AG04449 (cell line): ENCODE measurements at regions of chr2 and their contacts with region 1.

Region 1: DNA sequence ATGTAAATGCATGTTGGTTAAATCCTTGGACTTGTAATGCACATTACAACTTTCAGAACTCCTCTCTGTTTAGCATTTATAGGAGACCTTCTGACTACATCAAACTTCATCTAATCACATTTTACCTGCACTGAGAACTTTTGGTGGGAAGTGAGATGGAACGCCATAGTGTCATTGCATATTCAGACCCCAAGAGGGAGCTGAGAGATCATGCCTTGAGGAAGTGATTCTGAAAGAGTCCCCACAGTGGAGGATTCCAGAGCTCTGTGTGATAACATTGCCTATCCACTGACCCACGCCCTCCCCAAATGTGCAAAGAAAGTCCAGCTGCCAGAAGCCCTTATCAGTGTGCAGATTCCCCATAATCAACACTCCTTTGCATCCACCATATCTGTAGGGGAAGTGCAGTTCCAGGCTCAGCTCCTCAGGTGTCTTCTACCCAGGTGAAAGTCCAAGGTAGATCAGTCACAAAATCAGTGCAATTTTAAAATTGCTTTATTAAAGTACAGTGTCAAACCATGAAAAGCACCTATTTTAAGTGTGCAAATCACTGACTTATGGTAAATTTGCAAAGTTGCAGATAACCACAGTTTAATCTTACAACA is 212.4 kb downstream of the RPIA start:
- DNase-seq: no peak
- H3K4me3 ChIP-seq: no peak overlapping the region
- CTCF ChIP-seq: peak; percentile 62

Region 2: GRCh38 chr2:88691339-88692183 is 212.3 kb before region 1 on chr2 and contains the start of gene RPIA:
- CTCF ChIA-PET with region 1: no interaction called
- POLR2A ChIA-PET with region 1: no interaction called
- DNase-seq: peak; percentile 91
- H3K4me3 ChIP-seq: peak within 1 kb of the TSS; percentile 94
- CTCF ChIP-seq: peak; percentile 78

Region 3: DNA sequence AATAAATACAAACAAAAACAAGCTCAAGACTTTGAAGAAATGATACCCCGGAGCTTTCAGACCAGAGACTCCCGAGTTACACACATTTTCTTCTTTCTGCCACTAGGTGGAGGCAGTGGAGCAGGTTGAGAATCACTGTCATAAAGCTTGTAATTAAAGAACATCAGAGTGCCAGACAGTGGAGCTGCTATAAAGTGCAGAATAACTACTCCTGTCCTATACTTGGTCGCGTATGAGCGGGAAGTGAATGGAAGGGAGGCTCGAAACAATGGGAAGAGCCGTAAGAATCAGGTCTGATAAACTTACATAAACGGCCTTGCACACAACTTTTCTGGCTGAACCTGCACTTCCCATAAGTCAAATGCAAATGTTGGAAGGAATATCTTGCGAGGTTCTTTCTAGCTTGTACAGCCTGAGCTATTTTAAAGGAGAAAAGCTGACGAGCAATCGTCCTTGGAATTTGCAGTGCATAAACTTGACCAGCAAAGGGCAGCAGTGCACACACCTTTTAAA is 23.4 kb before region 1 on chr2:
- CTCF ChIA-PET with region 1: interaction called, 10 read pairs
- POLR2A ChIA-PET with region 1: no interaction called
- DNase-seq: no peak
- H3K4me3 ChIP-seq: no peak overlapping the region
- CTCF ChIP-seq: peak; percentile 72